AG04450 (cell line): ENCODE measurements at regions of chrX and their contacts with region 1.

Region 1: DNA sequence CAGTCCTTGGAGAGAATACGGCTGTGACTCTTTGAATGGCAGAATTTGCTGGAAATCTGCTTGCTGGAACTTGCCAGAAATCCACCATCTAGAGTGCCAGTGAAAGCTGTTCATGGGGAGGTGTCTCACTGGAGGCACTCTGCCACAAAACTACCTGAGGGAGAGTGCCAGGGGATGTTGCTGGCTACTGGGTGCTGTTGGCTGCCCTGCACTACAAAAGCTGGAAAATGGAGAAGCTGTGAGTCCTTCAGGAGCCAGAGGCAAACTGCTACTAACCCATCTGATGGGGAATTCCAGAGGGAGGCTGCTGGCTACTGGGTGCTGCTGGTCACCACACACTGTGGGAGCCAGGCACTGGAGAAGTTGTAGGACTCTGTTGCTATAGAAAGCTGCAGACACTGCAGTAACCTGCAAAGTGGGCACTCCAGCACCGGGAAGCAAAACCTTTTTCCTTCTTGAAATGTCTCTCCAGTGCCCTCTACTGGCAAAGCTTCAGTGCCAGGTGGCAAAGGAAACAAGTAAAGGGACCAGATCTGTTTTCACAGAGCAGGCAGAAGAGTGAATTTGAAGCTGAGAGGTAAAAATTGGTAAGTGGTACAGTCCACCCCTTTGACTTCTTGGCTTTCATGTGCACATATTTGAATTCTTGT is 47.8 kb upstream of the HSD17B10 start:
- DNase-seq: peak; percentile 21
- H3K4me3 ChIP-seq: no peak overlapping the region
- H3K27ac ChIP-seq: no peak overlapping the region
- H3K27me3 ChIP-seq: peaks cover 3% of the 10 kb centered on the region
- CTCF ChIP-seq: peak; percentile 76

Region 2: DNA sequence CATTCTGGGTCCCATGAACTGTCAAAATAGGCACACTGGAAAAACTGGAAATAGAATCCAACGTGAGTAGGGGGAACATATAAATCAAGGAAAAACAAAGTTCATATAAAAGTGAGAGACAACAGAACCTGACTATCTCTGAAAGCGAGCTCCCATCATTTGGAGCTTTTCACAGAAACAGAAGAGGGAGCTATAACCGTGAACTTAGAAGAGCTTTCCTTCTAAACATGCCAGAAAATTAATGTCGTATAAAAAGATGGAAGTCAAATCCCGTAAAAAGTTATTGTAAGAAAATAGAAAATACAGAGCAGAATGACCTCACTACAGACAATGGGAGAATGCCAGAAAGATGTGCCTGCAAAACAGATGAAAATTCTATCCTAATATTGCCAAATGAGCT is 23.9 kb before region 1 on chrX:
- CTCF ChIA-PET with region 1: interaction called, 26 read pairs
- POLR2A ChIA-PET with region 1: no interaction called
- DNase-seq: no peak
- H3K4me3 ChIP-seq: no peak overlapping the region
- H3K27ac ChIP-seq: no peak overlapping the region
- H3K27me3 ChIP-seq: no peaks in the 10 kb centered on the region
- CTCF ChIP-seq: peak; percentile 44

Region 3: GRCh38 chrX:53556868-53557267 is 74.9 kb after region 1 on chrX:
- CTCF ChIA-PET with region 1: no interaction called
- POLR2A ChIA-PET with region 1: no interaction called
- DNase-seq: no peak
- H3K4me3 ChIP-seq: no peak overlapping the region
- H3K27ac ChIP-seq: no peak overlapping the region
- H3K27me3 ChIP-seq: no peaks in the 10 kb centered on the region
- CTCF ChIP-seq: no peak